Calu3 (cell line): ENCODE measurements at regions of chr12 and their contacts with region 1.

Region 1: DNA sequence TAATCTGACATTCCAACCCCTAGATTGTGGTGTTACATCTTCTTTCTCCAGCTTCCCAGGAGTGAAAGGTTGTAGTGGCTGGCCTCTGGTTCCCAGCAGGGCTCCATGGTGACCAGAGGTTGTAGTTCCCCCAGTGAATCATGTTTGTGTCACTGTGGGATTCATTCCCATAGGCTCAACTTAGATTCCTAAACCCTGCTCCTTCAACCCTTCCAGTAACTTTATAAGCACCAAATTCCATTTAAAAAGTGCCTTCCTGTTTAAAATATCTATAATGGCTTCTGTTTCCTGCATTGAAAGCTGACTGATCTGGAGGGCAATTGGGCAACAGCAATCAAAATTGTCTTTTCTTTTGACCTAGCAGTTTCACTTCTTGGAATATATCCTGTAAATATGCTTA is 40.5 kb upstream of the TBC1D15 start:
- DNase-seq: no peak
- H3K4me3 Mint-ChIP-seq: no peak overlapping the region
- H3K27ac Mint-ChIP-seq: no peak overlapping the region
- H3K4me1 Mint-ChIP-seq: no peaks in the 10 kb centered on the region
- H3K27me3 Mint-ChIP-seq: no peaks in the 10 kb centered on the region
- CTCF ChIP-seq: no peak

Region 2: GRCh38 chr12:71602745-71603577 is 196.1 kb before region 1 on chr12:
- CTCF ChIA-PET with region 1: no interaction called
- intact Hi-C with region 1: no loop called
- DNase-seq: no peak
- H3K4me3 Mint-ChIP-seq: no peak overlapping the region
- H3K27ac Mint-ChIP-seq: no peak overlapping the region
- H3K4me1 Mint-ChIP-seq: no peaks in the 10 kb centered on the region
- H3K27me3 Mint-ChIP-seq: peaks cover 7% of the 10 kb centered on the region
- CTCF ChIP-seq: no peak

Region 3: DNA sequence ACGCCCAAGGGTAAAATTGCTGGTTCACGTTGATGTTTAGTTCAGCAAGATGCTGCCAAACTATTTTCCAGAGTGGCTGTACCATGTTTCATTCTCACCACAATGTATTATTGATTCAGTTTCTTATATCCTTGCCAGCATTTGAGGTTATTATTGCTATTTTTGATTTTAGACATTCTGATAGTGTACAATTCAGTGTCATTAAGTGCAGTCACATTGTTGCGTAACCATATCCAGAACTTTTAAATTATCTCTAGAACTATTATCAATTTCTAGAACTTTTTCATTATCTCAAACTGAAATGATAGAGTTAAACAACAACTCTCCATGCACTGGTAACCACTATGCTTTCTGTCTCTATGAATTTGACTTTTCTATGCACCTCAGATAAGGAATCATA is 29.7 kb after region 1 on chr12:
- CTCF ChIA-PET with region 1: no interaction called
- intact Hi-C with region 1: no loop called
- DNase-seq: no peak
- H3K4me3 Mint-ChIP-seq: no peak overlapping the region
- H3K27ac Mint-ChIP-seq: no peak overlapping the region
- H3K4me1 Mint-ChIP-seq: no peaks in the 10 kb centered on the region
- H3K27me3 Mint-ChIP-seq: no peaks in the 10 kb centered on the region
- CTCF ChIP-seq: no peak

Region 4: DNA sequence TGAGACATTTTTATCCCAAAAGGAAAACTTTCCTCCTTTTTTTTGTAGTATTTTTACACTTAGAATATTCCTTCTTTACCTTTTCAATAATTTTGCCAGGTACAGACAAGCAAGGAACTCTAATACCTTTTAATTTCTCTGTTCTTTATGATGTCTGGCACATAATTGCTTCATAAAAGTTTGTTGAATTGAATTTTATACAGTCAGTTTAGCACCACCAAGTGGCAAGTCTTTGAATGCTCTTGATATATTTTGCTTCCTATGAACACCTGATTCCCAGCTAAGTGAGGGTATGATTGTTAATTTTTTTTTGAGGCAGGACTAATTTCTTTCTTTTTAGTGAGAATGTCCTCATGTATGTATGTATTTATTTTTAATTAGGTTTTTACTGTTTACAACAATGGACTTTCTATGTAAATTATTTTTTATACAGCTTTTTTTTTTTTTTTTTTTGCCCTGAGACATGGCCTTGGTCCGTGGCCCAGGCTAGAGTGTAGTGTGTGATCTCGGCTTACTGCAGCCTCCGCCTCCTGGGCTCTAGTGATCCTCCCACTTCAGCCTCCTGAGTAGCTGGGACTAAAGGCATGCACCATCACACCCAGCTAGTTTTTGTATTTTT is 47.3 kb after region 1 on chr12:
- CTCF ChIA-PET with region 1: interaction called, 3 read pairs
- intact Hi-C with region 1: loop called (anchors 5 kb)
- DNase-seq: peak; percentile 26
- H3K4me3 Mint-ChIP-seq: no peak overlapping the region
- H3K27ac Mint-ChIP-seq: peak overlapping the region; percentile 37
- H3K4me1 Mint-ChIP-seq: no peaks in the 10 kb centered on the region
- H3K27me3 Mint-ChIP-seq: no peaks in the 10 kb centered on the region
- CTCF ChIP-seq: peak; percentile 34